ENCODE measurements at regions of chr6 and their contacts with region 1.

Region 1: DNA sequence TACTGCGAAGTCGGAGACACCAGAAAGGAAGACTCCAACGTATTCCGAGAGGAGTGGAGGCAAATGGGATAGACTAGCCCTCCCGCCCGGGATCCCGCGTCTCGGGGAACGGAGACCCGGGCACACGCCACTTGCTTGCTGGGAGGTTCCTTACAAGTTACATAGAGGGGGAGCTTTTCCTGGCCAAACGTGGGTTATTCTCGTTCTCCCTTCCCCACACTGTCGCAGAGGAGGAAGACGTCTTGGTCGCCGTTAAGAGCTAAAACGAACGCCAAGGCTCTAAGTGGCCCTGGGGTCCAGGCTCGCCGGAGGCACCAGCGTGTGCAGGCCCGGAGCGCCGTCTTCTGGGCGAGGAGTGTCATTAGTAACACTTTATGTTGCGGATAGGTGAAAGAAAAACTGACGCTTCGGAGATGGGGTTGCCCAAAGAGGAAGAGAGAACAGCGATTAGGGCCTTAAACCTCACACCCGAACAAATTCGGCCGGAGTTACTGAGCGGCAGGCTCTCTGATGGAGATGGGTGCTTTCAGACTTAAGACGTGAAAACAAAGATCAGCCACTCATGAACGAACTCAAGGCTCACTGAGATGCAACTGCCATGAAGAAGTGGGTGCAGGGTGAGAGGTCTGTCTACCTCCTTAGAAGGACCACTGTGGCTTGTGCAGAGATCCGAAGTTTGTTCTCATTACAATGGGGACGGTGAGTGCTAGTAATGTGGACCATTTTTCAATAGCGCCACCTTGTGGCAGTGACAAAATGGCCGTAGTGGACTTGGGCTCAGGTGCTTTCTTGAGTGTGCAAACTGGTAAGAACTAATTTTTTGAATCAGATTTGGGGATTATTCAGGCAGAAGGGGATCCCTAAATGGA is 11.7 kb upstream of the ZNF311 start:
- DNase-seq: peak; percentile 83 to 96
- H3K4me3 ChIP-seq: peak overlapping the region; percentile 19
- CTCF ChIP-seq: peak in 1 of 3 donors; percentile 20
- POLR2A ChIP-seq: no peak

Region 2: DNA sequence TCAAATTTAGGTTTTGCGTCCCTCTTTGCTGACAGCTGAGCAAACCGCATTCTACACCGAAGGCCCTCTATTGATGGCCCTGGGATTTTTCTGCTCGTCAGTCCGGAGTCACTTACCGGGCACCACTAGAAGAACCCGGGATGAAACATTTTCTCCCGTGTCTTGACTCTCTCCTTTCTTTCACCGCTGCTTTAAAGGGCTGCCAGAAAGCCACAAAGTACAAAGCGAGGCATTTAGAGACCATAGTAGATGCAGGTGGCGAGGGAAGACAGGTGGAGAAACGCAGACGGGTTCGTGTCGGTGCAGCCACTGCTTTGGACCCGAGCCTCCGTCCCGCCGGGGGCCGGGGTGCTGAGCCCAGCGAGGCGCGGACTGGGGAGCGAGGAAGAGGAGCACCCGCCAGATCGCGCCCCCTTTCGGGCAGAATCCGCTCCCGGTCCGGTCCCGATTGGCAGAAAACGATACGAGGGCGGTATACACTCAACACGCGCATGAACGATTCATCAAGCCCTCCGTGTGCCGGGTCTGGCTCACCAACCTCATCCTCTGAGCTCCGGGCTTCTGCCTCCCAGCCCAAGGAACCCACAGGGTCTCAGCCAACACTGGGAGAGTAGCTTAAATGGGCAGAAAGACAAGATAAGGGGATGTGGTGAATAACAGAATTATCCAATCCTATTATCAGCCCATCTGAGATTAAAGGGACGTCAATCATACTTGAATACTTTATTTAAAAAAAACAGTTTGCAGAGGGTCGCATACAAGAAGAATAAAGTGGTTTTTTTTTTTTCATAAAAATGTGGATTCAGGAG is 178.0 kb before region 1 on chr6:
- intact Hi-C with region 1: loop called (anchors 5 kb)
- DNase-seq: peak; percentile 65 to 95
- H3K4me3 ChIP-seq: peak overlapping the region; percentile 61
- CTCF ChIP-seq: peak in 1 of 3 donors; percentile 26
- POLR2A ChIP-seq: no peak

Region 3: DNA sequence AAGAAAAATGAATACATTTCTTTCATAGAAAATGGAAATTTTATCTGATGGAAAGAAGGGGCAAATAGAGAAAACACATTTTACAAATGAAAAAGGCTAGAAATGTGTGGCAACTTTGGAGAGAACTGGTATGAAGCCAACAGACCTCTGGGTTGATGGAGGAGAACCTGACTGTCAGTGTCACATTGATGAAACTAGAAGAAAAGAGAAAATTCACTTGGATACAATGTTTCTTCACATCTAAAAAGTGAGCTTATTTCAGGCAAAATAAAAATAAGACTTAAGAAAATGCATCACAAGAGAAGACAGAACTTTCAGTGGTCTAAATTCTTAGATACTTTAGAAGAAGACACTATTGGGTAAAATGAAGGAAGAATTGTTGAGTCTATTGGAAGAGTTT is 378.5 kb after region 1 on chr6 and contains the start of gene OR12D2:
- intact Hi-C with region 1: no loop called
- DNase-seq: no peak
- H3K4me3 ChIP-seq: no peak within 1 kb of the TSS
- CTCF ChIP-seq: no peak
- POLR2A ChIP-seq: no peak
- total RNA-seq, gene OR12D2: not detected

Measured in lower leg skin (tissue), 4 donors.